HEK293 (cell line): ENCODE measurements at regions of chr6 and their contacts with region 1.

Region 1: GRCh38 chr6:105431226-105431625 is 28.3 kb upstream of the PREP start:
- H3K4me3 ChIP-seq: no peak overlapping the region
- H3K27ac ChIP-seq: no peak overlapping the region
- H3K4me1 ChIP-seq: no peaks in the 10 kb centered on the region
- CTCF ChIP-seq: no peak

Region 2: GRCh38 chr6:104887358-104887757 is 543.9 kb before region 1 on chr6:
- CTCF ChIA-PET with region 1: no interaction called
- POLR2A ChIA-PET with region 1: no interaction called
- H3K4me3 ChIP-seq: no peak overlapping the region
- H3K27ac ChIP-seq: no peak overlapping the region
- H3K4me1 ChIP-seq: no peaks in the 10 kb centered on the region
- CTCF ChIP-seq: no peak

Region 3: DNA sequence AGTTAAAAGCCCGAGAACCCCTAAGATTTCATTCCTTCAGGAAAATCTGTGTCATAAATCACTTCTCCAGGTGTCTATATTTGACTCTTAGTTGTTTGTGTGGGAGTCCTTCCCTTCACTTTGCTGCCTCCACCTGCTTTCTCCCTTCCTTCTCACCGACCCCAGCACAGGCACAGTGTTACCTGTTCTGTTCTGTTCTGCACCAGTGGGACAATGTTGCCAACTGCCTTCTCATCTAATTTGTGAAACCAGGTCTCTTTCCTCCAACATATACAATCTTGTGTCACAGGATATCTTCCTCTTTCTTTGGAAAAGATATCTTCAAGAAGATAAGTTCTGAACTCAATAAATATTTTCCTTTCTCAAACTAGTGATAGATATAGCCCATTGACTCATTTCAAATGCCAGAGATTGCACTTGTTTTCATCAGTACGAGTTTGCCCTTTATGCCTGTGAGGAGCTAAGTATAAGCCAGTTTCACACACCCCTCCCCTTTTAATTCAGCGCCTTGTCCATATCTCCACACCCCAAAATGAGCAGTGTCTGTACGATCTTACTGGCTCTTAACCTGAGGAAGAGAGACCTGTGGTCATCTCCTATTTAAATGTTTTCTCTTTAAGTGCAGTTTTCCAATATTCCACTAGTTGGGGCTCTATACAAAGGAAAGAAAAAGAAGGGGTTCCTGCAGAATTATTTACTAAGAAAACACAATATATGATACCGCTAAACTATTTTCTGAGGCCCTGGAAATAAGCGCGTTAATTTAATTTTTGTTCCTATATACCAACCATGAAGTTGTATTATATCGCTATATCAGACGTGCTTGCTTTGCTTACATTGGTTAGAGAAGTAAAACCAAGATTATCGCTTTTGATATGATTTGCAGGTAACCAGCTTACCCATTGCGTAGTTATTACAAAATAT is 53.3 kb after region 1 on chr6:
- CTCF ChIA-PET with region 1: interaction called, 14 read pairs
- POLR2A ChIA-PET with region 1: interaction called, 3 read pairs
- H3K4me3 ChIP-seq: no peak overlapping the region
- H3K27ac ChIP-seq: no peak overlapping the region
- H3K4me1 ChIP-seq: peaks cover 16% of the 10 kb centered on the region
- CTCF ChIP-seq: peak; percentile 50; the same call in 1 of the 2 replicates

Region 4: DNA sequence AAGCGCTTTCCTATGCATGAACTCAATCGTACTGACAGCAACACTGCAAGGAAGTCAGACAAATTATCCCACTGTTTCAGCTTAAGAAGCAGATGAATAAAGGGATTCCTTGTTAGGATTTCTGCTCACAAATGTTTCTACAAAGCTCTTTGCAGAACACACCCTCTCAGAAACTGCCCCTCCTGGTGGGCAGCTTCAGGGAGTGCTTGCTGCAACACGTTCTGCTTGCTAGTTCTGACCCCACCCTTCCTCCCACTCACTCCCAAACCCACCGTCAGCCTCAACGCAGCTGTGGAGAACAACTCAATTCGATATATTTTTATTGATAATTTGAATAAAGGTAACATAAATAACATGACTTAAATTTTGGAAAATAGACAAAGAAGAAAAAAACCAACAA is 404.1 kb after region 1 on chr6:
- CTCF ChIA-PET with region 1: interaction called, 20 read pairs
- POLR2A ChIA-PET with region 1: no interaction called
- H3K4me3 ChIP-seq: no peak overlapping the region
- H3K27ac ChIP-seq: no peak overlapping the region
- H3K4me1 ChIP-seq: no peaks in the 10 kb centered on the region
- CTCF ChIP-seq: 0 out of 2 replicates have a peak, but pooled peaks have one; percentile 20

Region 5: GRCh38 chr6:106119546-106119945 is 688.3 kb after region 1 on chr6:
- CTCF ChIA-PET with region 1: interaction called, 11 read pairs
- POLR2A ChIA-PET with region 1: no interaction called
- H3K4me3 ChIP-seq: no peak overlapping the region
- H3K27ac ChIP-seq: no peak overlapping the region
- H3K4me1 ChIP-seq: no peaks in the 10 kb centered on the region
- CTCF ChIP-seq: no peak